Activated T-helper 1 cell treated with anti-CD3 and anti-CD28 coated beads, Interleukin-12 subunit alpha, Interleukin-12 subunit beta, Interleukin-2, Interleukin-4 antibody, amounts not matched to agents 30 ng/mL and 10 ng/mL and 1 ng/mL, durations not matched to agents 14 hours and 24 hours and 36 hours (primary cell): ENCODE measurements at regions of chr7 and their contacts with region 1.

Region 1: GRCh38 chr7:128409596-128410160 is at the start of gene IMPDH1:
- DNase-seq: peak; percentile 82
- H3K4me3 Mint-ChIP-seq: peak within 1 kb of the TSS; percentile 93
- H3K27ac Mint-ChIP-seq: peak within 1 kb of the TSS; percentile 80
- H3K4me1 Mint-ChIP-seq: peaks cover 36% of the 10 kb centered on the region
- H3K27me3 Mint-ChIP-seq: peaks cover 25% of the 10 kb centered on the region
- total RNA-seq, gene IMPDH1: 91.7 and 95.8 TPM in 2 replicates

Region 2: DNA sequence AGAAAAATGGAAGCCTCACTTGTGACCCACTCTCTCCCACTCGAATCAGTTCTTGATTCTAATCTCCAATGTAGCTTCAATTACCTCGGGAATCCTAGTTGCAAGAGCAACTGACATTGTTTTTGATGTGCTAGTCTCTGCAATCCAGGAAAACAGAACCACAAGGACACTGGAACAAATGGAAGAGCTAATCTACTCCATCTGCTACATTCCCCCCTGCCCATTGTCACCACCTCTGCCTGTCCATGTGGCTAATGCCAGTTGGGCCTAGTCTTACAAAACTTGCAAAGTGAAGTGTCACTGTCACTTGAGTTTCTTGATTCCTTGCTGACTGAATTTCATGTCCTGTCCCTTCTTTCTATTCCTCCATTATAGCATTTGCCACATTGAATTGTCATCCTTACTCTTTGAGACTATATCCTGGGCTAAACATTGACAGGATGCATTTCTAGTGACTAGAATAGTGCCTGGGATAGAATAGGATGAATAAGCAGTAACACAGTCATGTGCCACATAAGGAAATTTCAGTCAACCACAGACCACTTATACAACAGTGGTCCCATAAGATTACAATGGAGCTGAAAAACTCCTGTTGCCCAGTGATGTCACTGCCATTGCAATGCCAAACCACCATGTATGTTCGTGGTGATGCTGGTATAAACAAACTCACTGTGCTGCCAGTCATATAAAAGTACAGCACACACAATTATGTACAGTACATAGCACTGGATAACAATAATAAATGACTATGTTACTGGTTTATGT is 837.8 kb before region 1 on chr7:
- intact Hi-C with region 1: no loop called
- DNase-seq: no peak
- H3K4me3 Mint-ChIP-seq: no peak overlapping the region
- H3K27ac Mint-ChIP-seq: no peak overlapping the region
- H3K4me1 Mint-ChIP-seq: no peaks in the 10 kb centered on the region
- H3K27me3 Mint-ChIP-seq: no peaks in the 10 kb centered on the region

Region 3: GRCh38 chr7:128425850-128426249 is 16.2 kb after region 1 on chr7:
- intact Hi-C with region 1: loop called (anchors 1 kb)
- DNase-seq: peak; percentile 68
- H3K4me3 Mint-ChIP-seq: no peak overlapping the region
- H3K27ac Mint-ChIP-seq: no peak overlapping the region
- H3K4me1 Mint-ChIP-seq: peaks cover 22% of the 10 kb centered on the region
- H3K27me3 Mint-ChIP-seq: peaks cover 6% of the 10 kb centered on the region

Region 4: DNA sequence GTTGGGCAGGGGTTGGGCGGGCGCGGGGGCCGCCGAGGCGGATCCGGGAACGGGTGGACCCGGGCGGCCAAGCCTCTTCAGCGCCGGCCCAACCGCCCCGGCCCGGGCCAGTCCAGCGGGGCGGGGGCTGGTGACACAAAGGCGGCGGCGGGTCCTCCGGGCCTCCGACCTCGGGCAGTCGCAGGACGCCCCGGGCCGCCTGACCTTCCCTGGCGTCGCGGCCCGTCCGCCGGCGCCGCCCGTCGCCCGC is 121.1 kb after region 1 on chr7:
- intact Hi-C with region 1: loop called (anchors 5 kb)
- DNase-seq: no peak
- H3K4me3 Mint-ChIP-seq: no peak overlapping the region
- H3K27ac Mint-ChIP-seq: no peak overlapping the region
- H3K4me1 Mint-ChIP-seq: peaks cover 40% of the 10 kb centered on the region
- H3K27me3 Mint-ChIP-seq: no peaks in the 10 kb centered on the region